ENCODE measurements at regions of chr12 and their contacts with region 1.

Region 1: DNA sequence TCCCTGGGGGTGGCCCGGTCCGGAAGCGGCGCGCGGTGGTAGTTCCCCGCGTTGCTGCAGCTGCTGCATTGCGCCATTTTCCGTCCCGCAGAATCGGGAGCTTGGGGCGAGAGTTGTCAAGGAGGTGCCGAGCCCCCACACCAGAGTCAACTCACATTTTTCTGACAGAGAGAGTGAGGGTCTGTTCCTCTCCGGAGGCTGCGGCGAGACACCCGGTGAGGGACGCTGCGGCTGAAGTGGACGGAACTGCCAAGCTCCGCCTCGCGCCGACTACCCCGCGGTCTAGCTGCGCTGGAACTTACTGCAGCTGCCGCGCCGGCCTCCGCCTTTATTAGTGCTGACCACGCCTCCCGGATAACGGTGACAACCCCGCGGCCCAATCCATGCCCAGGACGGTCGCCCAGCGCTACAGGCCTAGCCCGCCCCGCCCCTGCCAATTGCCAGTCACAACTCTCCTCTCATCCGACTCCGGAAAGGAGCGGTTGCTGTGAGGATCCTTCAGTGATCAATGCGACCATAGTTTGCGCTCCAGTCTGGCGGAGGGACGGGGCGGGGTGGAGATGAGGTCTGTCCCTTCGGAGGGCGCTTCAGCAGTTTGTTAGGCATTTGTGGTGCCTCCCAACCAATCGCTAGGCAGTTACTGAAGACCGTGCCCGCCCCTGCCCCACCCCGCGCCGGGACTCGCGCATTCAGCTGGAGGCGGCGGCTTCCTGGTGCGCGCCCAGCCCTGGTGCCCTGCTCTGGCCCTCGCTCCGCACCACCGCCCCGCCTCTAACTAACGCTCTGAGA is at the start of gene VAMP1:
- H3K4me3 Mint-ChIP-seq: peak within 1 kb of the TSS; percentile 82
- H3K27ac Mint-ChIP-seq: peak within 1 kb of the TSS; percentile 94
- H3K4me1 Mint-ChIP-seq: peaks cover 51% of the 10 kb centered on the region
- H3K27me3 Mint-ChIP-seq: peaks cover 2% of the 10 kb centered on the region

Region 2: GRCh38 chr12:6423267-6424007 is 47.1 kb before region 1 on chr12:
- intact Hi-C with region 1: loop called (anchors 1 kb)
- H3K4me3 Mint-ChIP-seq: no peak overlapping the region
- H3K27ac Mint-ChIP-seq: no peak overlapping the region
- H3K4me1 Mint-ChIP-seq: peaks cover 25% of the 10 kb centered on the region
- H3K27me3 Mint-ChIP-seq: no peaks in the 10 kb centered on the region

Region 3: DNA sequence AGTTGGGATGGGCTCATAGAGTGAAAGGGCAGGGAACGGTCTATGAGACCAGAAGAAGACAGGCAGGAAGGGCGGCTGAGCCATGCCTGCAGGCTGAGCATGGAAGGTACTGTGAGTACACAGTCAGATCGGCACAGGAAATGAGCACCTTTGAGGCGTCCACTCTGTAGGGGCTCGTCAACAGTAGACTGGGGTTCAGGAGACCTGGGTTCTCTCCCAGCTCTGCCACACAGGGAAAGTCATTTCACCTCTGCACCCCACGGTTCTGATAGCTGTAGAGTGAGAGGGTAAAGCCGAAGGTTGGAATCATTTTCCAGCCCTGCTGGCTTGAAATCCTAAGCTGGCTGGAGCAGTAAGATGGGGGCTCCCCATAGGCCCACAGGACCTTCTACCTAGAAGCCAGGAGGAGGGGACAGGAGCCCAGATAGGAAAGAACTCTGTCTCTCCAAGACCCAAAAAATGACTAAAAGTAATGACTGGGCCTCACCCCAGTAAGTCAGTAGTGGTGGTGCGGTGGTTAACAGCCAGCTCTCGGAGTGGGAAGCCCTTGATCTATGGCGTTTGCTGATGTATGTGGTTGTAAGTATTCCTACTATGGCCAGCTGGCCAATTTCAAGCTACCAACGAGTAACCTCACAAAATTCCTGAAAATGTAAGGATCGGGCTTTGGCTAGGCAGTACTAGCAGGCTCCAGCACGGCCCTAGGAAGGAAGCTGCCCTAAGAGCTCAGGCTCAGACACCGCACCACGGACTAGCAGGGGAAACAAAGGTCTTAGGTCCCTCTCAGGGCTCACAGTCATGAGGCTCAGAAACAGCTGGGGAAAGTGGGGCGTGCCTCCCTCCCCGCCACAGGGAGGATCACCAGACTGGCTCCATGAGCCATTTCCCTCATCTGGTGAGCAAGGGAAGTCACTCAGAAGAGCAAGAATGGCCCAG is 36.1 kb before region 1 on chr12:
- intact Hi-C with region 1: no loop called
- H3K4me3 Mint-ChIP-seq: no peak overlapping the region
- H3K27ac Mint-ChIP-seq: no peak overlapping the region
- H3K4me1 Mint-ChIP-seq: peaks cover 18% of the 10 kb centered on the region
- H3K27me3 Mint-ChIP-seq: peaks cover 3% of the 10 kb centered on the region

Region 4: DNA sequence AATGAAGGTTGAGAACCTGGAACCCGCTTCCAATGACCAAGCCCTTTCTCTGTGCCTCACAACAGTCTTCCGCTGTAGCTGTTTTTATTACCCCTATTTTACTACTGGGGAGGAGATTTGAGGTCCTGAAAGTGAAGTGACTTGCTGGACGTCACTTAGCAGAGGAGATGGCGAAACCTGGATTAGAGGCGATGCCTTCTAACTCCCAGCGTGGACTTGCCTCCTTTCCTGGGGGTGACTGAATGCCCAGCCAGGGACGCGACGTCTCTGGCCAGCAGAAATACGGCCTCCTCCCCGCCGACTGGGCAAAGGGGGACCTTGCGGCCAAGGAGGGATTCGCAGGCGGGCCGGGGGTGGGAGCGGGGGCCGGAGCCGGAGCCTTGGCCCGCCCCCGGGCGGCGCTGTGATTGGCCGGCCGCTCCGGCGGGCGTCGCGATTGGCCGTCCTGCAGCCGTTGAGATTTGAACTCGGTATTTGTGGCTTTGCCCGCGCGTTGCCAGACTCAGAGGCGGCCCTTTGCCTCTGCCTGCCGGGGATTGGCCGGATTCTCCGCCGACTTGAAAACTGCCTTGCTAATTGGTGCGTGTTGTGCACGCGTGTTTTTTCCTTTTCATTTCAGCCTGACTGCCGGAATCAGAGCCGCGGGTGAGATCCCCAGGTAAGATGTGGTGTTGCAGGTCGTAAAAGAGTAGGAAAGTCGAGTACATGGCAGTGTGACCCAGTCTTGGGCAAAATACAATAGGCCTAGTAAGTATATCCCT is 23.1 kb after region 1 on chr12 and contains the start of gene NCAPD2:
- intact Hi-C with region 1: loop called (anchors 2 kb)
- H3K4me3 Mint-ChIP-seq: peak within 1 kb of the TSS; percentile 95
- H3K27ac Mint-ChIP-seq: peak within 1 kb of the TSS; percentile 99
- H3K4me1 Mint-ChIP-seq: peaks cover 15% of the 10 kb centered on the region
- H3K27me3 Mint-ChIP-seq: no peaks in the 10 kb centered on the region

Measured in dendritic cell treated with granulocyte-macrophage colony-stimulating factor and Interleukin-4, amounts not matched to agents 40 ng/mL and 50 ng/mL, for 4 days (primary cell).